AG04450 (cell line): ENCODE measurements at regions of chr3 and their contacts with region 1.

Region 1: DNA sequence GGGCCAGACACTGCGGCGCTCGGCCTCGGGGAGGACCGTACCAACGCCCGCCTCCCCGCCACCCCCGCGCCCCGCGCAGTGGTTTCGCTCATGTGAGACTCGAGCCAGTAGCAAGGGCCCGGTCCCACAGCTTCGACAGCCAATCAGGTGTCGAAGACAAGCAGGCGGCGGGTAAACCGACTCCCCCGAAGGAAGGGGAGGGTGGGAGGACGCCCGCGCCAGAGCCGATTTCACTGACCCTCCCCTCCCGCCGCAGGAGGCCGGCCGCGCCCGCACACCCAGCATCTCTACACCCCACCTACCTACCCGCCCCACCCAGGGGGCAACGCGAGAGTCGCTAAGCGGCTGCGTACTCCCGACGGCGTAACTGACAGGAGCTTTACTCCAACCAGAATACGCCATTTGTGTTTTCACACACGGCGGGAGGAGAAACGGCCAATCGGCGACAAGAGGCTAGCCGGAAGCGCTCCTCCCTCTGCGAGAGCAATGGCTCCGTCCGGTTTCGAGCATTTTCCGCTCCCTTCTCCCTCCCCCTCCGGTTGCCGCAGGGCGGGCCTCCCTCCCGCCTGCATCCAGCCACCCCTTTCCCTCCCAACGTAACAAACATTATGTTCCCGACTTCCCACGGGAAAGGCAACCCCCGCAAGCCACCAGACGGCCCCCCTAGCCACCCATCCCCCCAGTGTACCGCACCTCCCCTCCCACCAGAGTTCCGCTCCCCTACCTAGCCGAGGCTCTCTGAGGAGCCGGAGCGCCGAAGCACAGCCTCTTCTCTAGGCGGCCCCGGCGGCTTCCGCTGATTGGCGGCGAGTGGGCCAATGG is 504 bp upstream of the SETD5 start:
- DNase-seq: peak; percentile 100
- H3K4me3 ChIP-seq: peak overlapping the region; percentile 70
- H3K27ac ChIP-seq: peak overlapping the region; percentile 98
- H3K27me3 ChIP-seq: no peaks in the 10 kb centered on the region
- CTCF ChIP-seq: no peak

Region 2: GRCh38 chr3:9226326-9226725 is 170.6 kb before region 1 on chr3:
- CTCF ChIA-PET with region 1: no interaction called
- POLR2A ChIA-PET with region 1: no interaction called
- DNase-seq: no peak
- H3K4me3 ChIP-seq: no peak overlapping the region
- H3K27ac ChIP-seq: no peak overlapping the region
- H3K27me3 ChIP-seq: no peaks in the 10 kb centered on the region
- CTCF ChIP-seq: no peak

Region 3: DNA sequence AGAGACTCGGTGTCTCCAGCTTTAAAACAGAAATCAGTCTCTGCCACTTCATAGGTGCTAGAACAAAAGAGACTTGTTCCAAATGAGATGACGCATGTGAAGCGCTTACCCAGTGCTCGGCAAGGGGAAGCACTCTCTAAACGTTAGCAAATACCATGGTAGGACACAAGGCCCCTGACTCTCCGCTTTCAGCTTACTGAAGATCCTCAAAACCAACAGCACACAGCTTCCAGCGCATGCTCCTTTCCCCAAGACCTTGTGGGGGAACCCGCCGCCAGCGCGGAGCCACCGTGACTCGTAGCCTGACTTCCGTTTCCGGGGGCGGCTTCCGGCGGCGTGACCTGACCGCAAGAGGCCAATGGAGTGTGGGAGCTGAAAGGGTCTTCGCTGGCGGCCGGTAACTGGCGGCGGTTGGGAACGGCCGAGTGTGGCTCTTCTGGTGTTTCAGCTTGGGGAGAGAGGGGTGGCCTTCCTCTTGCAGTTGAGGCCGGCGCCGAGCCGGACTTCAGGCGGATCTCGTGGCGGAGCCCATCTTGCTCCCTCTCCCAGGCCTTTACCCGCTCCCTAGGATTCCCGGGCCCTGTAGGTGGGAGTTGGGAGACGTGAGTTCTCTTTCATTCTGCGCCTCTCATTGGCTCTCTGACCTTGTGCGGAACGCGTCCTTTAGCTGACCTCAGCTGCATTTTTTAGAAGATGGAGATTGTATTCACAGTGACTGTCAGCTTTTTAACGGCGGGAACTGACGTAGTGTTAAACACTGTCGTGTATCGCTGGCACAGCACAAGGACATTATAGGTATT is 34.0 kb before region 1 on chr3 and contains the start of gene THUMPD3:
- CTCF ChIA-PET with region 1: no interaction called
- POLR2A ChIA-PET with region 1: interaction called, 35 read pairs
- DNase-seq: peak; percentile 81
- H3K4me3 ChIP-seq: peak within 1 kb of the TSS; percentile 74
- H3K27ac ChIP-seq: peak within 1 kb of the TSS; percentile 96
- H3K27me3 ChIP-seq: no peaks in the 10 kb centered on the region
- CTCF ChIP-seq: no peak
- polyA plus RNA-seq, gene THUMPD3: 43.3 and 49.8 TPM in 2 replicates

Region 4: GRCh38 chr3:9384141-9384853 is 12.6 kb before region 1 on chr3:
- CTCF ChIA-PET with region 1: no interaction called
- POLR2A ChIA-PET with region 1: interaction called, 19 read pairs
- DNase-seq: no peak
- H3K4me3 ChIP-seq: no peak overlapping the region
- H3K27ac ChIP-seq: peak overlapping the region; percentile 41
- H3K27me3 ChIP-seq: no peaks in the 10 kb centered on the region
- CTCF ChIP-seq: no peak

Region 5: DNA sequence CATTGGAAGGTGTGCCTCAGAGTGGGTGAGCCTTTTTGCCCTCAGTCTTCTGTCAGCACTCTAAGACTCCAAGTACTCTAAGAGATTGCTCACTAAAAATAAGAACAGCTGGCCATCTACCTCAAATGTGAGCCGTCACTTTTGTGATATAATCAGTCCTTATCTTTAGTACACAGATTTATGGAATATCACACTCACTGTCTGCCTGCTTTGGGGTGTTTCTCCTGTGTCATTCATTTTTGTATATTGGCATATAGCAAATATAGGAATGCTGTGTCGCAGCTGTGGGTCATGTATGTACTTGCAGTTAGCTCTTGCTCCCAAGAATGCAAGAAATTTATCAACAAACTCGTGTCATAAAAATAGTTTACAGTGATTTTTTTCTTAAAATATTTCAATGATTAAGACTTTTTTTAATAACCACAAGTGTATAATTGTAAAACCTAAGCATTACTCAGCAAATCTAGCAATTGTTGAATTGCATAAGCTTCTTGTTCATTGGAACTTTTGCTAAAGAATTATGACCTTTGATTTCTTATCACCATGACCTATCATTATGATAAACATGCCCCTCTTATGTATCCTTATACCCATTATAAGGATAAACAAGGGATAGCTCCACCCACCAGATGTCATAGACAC is 19.3 kb after region 1 on chr3:
- CTCF ChIA-PET with region 1: interaction called, 4 read pairs
- POLR2A ChIA-PET with region 1: interaction called, 57 read pairs
- DNase-seq: no peak
- H3K4me3 ChIP-seq: no peak overlapping the region
- H3K27ac ChIP-seq: peak overlapping the region; percentile 69
- H3K27me3 ChIP-seq: no peaks in the 10 kb centered on the region
- CTCF ChIP-seq: no peak

Region 6: DNA sequence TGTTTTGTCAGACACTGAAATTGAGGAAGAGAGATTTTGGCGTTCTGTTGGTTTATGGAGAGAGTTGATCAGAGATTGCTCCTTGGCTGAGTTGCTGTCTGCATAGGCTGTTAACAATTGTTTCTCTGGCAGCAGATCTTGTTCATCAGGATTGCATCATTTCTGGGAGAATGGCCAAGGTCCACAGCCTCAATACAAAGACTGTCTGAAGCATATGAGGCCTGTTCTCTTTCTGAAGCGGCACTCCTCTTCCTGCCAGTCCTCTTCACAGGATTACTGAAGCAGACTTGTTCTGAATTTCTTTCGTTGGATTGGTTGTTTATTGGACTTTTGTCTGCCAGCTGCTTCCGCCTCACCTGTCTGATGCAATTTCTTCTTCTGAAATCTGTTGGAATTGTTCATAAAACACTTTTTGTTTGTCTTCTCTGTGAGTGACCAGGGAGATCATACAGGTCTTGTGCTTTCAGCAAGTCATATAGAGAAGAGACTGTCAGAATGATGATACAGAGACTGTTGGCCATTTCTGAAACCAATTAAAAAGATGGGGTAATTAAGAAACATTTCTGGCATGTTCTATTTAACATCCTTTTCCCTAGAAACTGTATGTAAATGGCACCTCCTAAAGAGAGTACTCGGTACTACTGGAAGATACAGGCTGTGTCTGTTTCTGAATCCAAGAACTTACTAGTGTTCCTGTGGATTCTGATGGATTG is 26.0 kb after region 1 on chr3:
- CTCF ChIA-PET with region 1: interaction called, 9 read pairs
- POLR2A ChIA-PET with region 1: interaction called, 57 read pairs
- DNase-seq: peak; percentile 92
- H3K4me3 ChIP-seq: peak overlapping the region; percentile 14; the same call in 1 of the 2 replicates
- H3K27ac ChIP-seq: peak overlapping the region; percentile 94
- H3K27me3 ChIP-seq: no peaks in the 10 kb centered on the region
- CTCF ChIP-seq: peak; percentile 67

Region 7: GRCh38 chr3:9452417-9452816 is 55.5 kb after region 1 on chr3:
- CTCF ChIA-PET with region 1: no interaction called
- POLR2A ChIA-PET with region 1: interaction called, 14 read pairs
- DNase-seq: no peak
- H3K4me3 ChIP-seq: no peak overlapping the region
- H3K27ac ChIP-seq: no peak overlapping the region
- H3K27me3 ChIP-seq: no peaks in the 10 kb centered on the region
- CTCF ChIP-seq: no peak